Activated T-helper 1 cell treated with anti-CD3 and anti-CD28 coated beads, Interleukin-12 subunit alpha, Interleukin-12 subunit beta, Interleukin-2, Interleukin-4 antibody, amounts not matched to agents 30 ng/mL and 10 ng/mL and 1 ng/mL, durations not matched to agents 14 hours and 24 hours and 36 hours (primary cell): ENCODE measurements at regions of chr6 and their contacts with region 1.

Region 1: GRCh38 chr6:36765594-36766398 is 68.2 kb downstream of the RAB44 start:
- DNase-seq: peak; percentile 79
- H3K4me3 Mint-ChIP-seq: no peak overlapping the region
- H3K27ac Mint-ChIP-seq: no peak overlapping the region
- H3K4me1 Mint-ChIP-seq: peaks cover 39% of the 10 kb centered on the region
- H3K27me3 Mint-ChIP-seq: no peaks in the 10 kb centered on the region

Region 2: DNA sequence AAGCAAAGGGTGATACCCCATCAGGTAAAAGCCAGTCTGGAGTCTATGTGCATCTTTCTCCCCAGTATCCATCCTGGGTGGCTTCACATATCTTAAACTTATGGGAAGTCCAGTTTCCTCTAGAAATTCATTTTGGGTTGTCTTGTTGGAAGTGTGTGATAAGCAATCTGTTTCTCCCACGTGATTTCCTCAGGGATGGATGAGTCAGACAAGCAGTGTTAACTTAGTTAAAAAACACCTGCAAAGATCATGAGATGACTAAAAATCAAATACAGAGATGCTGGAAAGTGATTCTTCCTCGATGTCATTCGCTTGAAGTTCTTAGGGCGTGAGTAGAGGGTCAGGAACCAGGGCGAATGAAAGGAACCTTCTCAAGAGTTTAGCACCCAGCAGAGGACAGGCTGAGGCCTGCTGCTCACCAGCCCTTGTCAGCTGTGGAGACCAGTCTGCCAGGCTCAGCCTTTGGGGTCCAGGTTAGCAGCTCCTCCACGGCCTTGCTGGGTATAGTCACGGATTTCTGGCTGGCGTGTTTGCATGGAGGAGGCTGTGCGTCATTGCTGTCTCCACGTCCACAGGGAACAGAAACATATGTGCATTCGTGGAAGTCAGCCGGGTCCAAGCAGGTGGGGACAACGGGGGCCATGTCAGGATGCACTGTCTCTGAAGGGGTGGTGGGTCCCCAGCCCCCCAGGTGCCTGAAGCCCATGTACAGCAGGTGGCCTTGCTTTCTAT is 498.7 kb before region 1 on chr6:
- intact Hi-C with region 1: no loop called
- DNase-seq: no peak
- H3K4me3 Mint-ChIP-seq: no peak overlapping the region
- H3K27ac Mint-ChIP-seq: no peak overlapping the region
- H3K4me1 Mint-ChIP-seq: no peaks in the 10 kb centered on the region
- H3K27me3 Mint-ChIP-seq: peaks cover 8% of the 10 kb centered on the region

Region 3: GRCh38 chr6:36642913-36643817 is 122.6 kb before region 1 on chr6:
- intact Hi-C with region 1: no loop called
- DNase-seq: no peak
- H3K4me3 Mint-ChIP-seq: no peak overlapping the region
- H3K27ac Mint-ChIP-seq: no peak overlapping the region
- H3K4me1 Mint-ChIP-seq: no peaks in the 10 kb centered on the region
- H3K27me3 Mint-ChIP-seq: peaks cover 19% of the 10 kb centered on the region

Region 4: DNA sequence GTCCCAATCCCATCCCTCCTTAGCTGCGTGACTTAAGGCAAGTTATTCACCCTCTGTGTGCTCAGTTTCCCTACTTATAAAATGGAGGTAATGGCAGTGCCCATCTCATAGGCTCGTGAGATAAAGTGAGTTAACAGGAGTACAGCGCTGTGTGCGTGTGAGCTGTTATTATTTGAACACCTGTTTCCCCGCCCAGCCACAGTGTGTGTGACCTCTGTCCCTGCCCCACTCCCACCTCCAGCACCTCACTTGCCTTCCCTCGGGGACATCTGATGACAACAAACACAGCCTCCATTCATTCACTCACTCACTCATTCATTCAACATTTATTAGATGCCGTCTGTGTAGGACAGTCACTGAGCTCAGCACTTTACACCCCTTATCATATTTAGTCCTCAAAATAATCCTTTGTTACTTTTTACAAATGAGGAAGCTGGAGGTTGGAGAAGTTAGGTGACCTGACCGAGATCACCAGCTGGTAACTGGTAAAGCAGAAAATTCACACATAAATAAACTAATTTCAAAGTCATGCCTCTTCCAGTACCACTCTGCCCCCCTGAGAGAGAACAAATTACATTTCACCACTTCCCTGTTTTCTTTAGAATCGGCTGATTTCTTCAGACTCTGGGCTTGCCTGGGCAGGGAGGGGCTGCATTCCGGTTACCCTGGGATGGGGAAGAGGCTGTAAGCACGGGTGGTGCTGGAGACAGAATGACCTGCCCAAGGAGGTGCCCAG is 14.8 kb after region 1 on chr6:
- intact Hi-C with region 1: loop called (anchors 1 kb)
- DNase-seq: no peak
- H3K4me3 Mint-ChIP-seq: no peak overlapping the region
- H3K27ac Mint-ChIP-seq: no peak overlapping the region
- H3K4me1 Mint-ChIP-seq: peaks cover 6% of the 10 kb centered on the region
- H3K27me3 Mint-ChIP-seq: peaks cover 4% of the 10 kb centered on the region

Region 5: DNA sequence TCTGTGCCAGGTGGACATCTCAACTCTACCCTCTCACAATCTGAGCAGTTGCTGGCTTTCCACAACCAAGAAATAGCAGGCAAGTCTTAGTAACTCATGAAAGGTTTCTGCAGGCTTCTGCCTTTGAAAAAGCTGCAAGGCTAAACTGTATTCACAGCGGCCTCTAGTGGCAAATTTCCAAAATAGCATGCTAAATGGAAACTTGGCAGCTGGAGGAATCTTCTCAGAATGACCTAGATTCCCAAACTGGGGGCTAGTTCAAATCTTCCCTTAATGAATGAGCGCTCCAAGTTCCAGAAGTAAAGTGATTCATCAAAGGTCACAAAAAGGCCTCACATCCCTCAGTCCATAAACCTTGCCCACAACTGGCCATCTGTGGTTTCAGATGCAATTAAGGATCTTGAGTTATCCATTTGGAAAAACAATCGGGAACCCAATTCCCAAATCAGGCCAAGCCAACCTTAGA is 85.4 kb after region 1 on chr6:
- intact Hi-C with region 1: loop called (anchors 1 kb)
- DNase-seq: peak; percentile 26
- H3K4me3 Mint-ChIP-seq: no peak overlapping the region
- H3K27ac Mint-ChIP-seq: no peak overlapping the region
- H3K4me1 Mint-ChIP-seq: peaks cover 12% of the 10 kb centered on the region
- H3K27me3 Mint-ChIP-seq: no peaks in the 10 kb centered on the region

Region 6: DNA sequence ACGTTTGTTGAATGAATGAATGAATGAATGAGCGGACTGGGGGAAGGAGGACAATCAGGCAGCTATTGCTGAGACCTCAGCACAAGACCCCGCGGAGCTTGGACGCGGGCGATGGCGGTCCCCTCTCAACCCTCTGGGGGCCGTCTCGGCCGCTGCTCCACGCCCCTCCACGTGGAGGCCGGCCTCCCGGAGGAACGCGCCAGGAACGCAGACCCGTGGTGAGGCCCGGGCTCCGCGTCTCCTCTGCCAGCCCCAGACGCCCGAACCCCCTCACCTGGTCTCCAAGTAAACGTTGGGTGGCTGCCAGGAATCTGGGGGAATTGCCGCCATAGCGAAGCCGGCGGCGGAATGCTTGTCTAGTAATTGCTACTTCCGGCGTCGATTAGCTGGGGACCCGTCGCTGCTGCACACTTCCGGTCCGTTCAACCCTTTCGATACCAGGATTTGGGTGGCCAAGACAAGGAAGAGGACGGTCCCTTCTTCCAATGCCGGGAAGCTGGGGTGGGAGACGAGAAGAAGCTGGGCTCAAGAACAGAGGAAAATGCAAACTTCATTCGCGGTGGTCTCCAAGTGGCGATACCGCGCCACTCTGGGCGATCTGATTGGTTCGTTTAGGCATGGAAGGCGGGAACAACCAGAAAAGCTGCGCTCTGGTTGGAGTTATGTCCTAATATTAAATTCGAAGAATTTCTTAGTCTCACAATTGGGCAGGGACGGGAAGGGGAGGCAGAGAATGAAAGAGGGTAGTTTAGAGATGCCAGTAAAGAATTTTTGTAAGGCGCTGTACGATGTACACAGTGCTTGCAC is 108.8 kb after region 1 on chr6 and contains the start of gene PPIL1:
- intact Hi-C with region 1: loop called (anchors 1 kb)
- DNase-seq: peak; percentile 75
- H3K4me3 Mint-ChIP-seq: peak within 1 kb of the TSS; percentile 93
- H3K27ac Mint-ChIP-seq: peak within 1 kb of the TSS; percentile 99
- H3K4me1 Mint-ChIP-seq: peaks cover 47% of the 10 kb centered on the region
- H3K27me3 Mint-ChIP-seq: peaks cover 2% of the 10 kb centered on the region
- total RNA-seq, gene PPIL1: 60.2 and 62.6 TPM in 2 replicates

Region 7: DNA sequence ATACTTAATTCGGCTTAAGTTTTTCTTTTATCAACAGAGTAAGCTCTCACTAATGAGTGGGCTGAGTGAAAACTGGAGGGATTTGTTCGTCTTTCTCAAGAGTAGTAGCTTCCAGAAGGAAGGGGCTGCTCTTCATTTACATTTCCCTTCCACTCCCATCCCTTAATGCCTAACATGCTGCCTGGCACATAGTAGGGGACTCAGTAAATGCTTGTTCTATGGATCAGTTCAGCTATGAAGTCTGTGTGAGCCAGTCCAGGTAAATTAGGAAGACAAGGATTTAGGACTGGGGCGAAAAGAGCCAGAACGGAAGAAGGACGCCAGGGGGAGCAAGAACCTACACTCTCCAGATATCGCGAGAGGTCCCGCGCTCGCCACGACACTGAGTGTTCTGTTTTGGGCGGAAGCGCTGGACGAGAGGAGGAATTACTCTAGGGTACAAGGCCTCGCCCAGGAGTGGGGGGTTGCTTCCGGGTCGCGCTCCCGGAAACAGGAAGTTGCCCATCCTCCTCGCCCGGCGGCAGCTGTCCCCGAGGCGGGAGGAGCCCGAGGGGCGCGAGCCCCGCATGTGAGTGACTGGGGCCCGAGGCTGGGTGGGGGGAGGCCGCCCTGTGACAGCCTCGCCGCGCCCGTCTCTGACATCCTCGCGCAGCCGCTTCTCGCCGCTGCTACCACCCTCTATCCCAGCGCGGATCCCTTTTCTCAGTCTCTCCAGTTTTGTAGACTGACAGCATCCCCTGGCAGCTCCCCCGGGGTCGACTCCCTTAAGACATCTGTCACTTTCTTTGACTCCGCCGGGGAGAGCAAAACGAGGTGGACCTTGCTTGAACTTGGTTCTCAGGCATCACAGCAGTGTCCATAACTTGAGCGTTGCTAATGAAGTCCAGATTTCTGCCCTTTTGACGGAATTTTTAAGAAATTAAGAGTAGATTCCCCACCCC is 119.9 kb after region 1 on chr6 and contains the start of gene C6orf89:
- intact Hi-C with region 1: loop called (anchors 1 kb)
- DNase-seq: peak; percentile 94
- H3K4me3 Mint-ChIP-seq: peak within 1 kb of the TSS; percentile 91
- H3K27ac Mint-ChIP-seq: peak within 1 kb of the TSS; percentile 82
- H3K4me1 Mint-ChIP-seq: peaks cover 37% of the 10 kb centered on the region
- H3K27me3 Mint-ChIP-seq: no peaks in the 10 kb centered on the region
- total RNA-seq, gene C6orf89: 31.5 and 31.8 TPM in 2 replicates